PC-9 (cell line): ENCODE measurements at regions of chr15 and their contacts with region 1.

Region 1: GRCh38 chr15:38972831-38973230 is 408.2 kb upstream of the RASGRP1 start:
- DNase-seq: no peak
- H3K4me3 ChIP-seq: no peak overlapping the region
- H3K27ac ChIP-seq: no peak overlapping the region
- H3K4me1 ChIP-seq: no peaks in the 10 kb centered on the region
- H3K27me3 ChIP-seq: no peaks in the 10 kb centered on the region
- CTCF ChIP-seq: no peak

Region 2: GRCh38 chr15:38690689-38691332 is 282.0 kb before region 1 on chr15:
- CTCF ChIA-PET with region 1: no interaction called
- POLR2A ChIA-PET with region 1: interaction called, 11 read pairs
- intact Hi-C with region 1: no loop called
- DNase-seq: peak in 1 of 2 experiments; percentile 61
- H3K4me3 ChIP-seq: no peak overlapping the region
- H3K27ac ChIP-seq: no peak overlapping the region
- H3K4me1 ChIP-seq: no peaks in the 10 kb centered on the region
- H3K27me3 ChIP-seq: no peaks in the 10 kb centered on the region
- CTCF ChIP-seq: peak; percentile 76